CD14-positive monocyte (primary cell): ENCODE measurements at regions of chr2 and their contacts with region 1.

Region 1: GRCh38 chr2:28621172-28622100 is 125.6 kb downstream of the PLB1 start:
- DNase-seq: peak; percentile 91 to 94 (median 93)
- H3K4me3 ChIP-seq: peak overlapping the region in 2 of 3 experiments; percentile 3 to 44
- H3K4me3 Mint-ChIP-seq: peak overlapping the region; percentile 60 to 76
- H3K27ac ChIP-seq: peak overlapping the region; percentile 85 to 96
- H3K27ac Mint-ChIP-seq: peak overlapping the region; percentile 96 to 99 (median 98)
- H3K4me1 ChIP-seq: peaks cover 47 to 50% of the 10 kb centered on the region in 2 donors
- H3K4me1 Mint-ChIP-seq: peaks cover 60% of the 10 kb centered on the region
- H3K27me3 ChIP-seq: no peaks in the 10 kb centered on the region
- H3K27me3 Mint-ChIP-seq: no peaks in the 10 kb centered on the region
- CTCF ChIP-seq: peak; percentile 52

Region 2: GRCh38 chr2:28601616-28602015 is 19.8 kb before region 1 on chr2:
- intact Hi-C with region 1: loop called in 1 of 2 experiments (anchors 2 kb)
- DNase-seq: peak; percentile 70 to 84 (median 79)
- H3K4me3 ChIP-seq: peak overlapping the region; percentile 39 to 73 (median 59)
- H3K4me3 Mint-ChIP-seq: peak overlapping the region; percentile 70 to 91
- H3K27ac ChIP-seq: peak overlapping the region; percentile 79 to 82
- H3K27ac Mint-ChIP-seq: peak overlapping the region; percentile 92 to 97 (median 96)
- H3K4me1 ChIP-seq: peaks cover 55 to 56% of the 10 kb centered on the region in 2 donors
- H3K4me1 Mint-ChIP-seq: peaks cover 60% of the 10 kb centered on the region
- H3K27me3 ChIP-seq: no peaks in the 10 kb centered on the region
- H3K27me3 Mint-ChIP-seq: peaks cover 0 to 7% (median 2%) of the 10 kb centered on the region in 3 donors
- CTCF ChIP-seq: no peak

Region 3: GRCh38 chr2:28639836-28640235 is 18.4 kb after region 1 on chr2:
- intact Hi-C with region 1: no loop called
- DNase-seq: no peak
- H3K4me3 ChIP-seq: no peak overlapping the region
- H3K4me3 Mint-ChIP-seq: no peak overlapping the region
- H3K27ac ChIP-seq: peak overlapping the region in 1 of 2 donors; percentile 22
- H3K27ac Mint-ChIP-seq: peak overlapping the region in 6 of 7 donors; percentile 27 to 77 (median 45)
- H3K4me1 ChIP-seq: no peaks in the 10 kb centered on the region
- H3K4me1 Mint-ChIP-seq: peaks cover 12% of the 10 kb centered on the region
- H3K27me3 ChIP-seq: no peaks in the 10 kb centered on the region
- H3K27me3 Mint-ChIP-seq: no peaks in the 10 kb centered on the region
- CTCF ChIP-seq: no peak

Region 4: GRCh38 chr2:28658106-28658768 is 36.8 kb after region 1 on chr2:
- intact Hi-C with region 1: no loop called
- DNase-seq: no peak
- H3K4me3 ChIP-seq: no peak overlapping the region
- H3K4me3 Mint-ChIP-seq: no peak overlapping the region
- H3K27ac ChIP-seq: no peak overlapping the region
- H3K27ac Mint-ChIP-seq: no peak overlapping the region
- H3K4me1 ChIP-seq: no peaks in the 10 kb centered on the region
- H3K4me1 Mint-ChIP-seq: peaks cover 5% of the 10 kb centered on the region
- H3K27me3 ChIP-seq: no peaks in the 10 kb centered on the region
- H3K27me3 Mint-ChIP-seq: peaks cover 0 to 5% (median 2%) of the 10 kb centered on the region in 3 donors
- CTCF ChIP-seq: no peak

Region 5: DNA sequence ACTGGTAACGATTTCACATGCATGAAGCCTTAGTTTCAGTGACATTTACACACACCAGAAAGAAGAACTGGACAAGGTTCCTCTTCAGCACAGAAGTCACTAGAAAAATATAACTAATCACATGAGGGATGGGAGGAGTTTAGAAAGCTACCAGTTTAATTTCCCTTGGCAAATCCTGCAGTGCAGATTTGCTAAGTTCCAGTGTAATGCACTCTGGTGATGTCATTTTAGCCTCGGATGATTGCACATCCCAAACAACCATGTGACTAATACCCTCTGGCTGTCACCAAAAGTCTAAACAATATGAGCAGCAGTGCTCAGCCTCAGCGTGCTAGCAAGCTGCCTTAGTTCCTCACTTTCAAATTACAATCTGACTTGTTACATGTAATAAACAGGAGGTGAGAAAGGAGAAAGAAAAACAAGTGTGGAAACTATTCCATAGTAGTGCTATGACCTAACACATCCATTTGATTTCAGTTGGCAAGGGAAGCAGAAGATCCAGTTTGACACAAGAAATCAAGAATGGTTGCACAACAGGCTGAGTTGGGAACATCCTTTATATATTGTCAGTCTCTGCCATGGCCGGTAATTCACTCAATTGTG is 94.9 kb after region 1 on chr2:
- intact Hi-C with region 1: loop called in 1 of 2 experiments (anchors 5 kb)
- DNase-seq: peak; percentile 97 to 99 (median 98)
- H3K4me3 ChIP-seq: peak overlapping the region in 1 of 3 experiments; percentile 50
- H3K4me3 Mint-ChIP-seq: peak overlapping the region in 1 of 2 donors; percentile 75
- H3K27ac ChIP-seq: peak overlapping the region; percentile 95 to 99
- H3K27ac Mint-ChIP-seq: peak overlapping the region; percentile 99 to 100 (median 99)
- H3K4me1 ChIP-seq: peaks cover 53 to 54% of the 10 kb centered on the region in 2 donors
- H3K4me1 Mint-ChIP-seq: peaks cover 49% of the 10 kb centered on the region
- H3K27me3 ChIP-seq: no peaks in the 10 kb centered on the region
- H3K27me3 Mint-ChIP-seq: peaks cover 0 to 4% (median 1%) of the 10 kb centered on the region in 3 donors
- CTCF ChIP-seq: no peak